Left cardiac atrium (tissue), 4 donors: ENCODE measurements at regions of chr5 and their contacts with region 1.

Region 1: GRCh38 chr5:123423278-123424149 is at the start of gene CEP120:
- DNase-seq: peak; percentile 99
- ATAC-seq: peak; percentile 99 to 100
- total RNA-seq, gene CEP120: 10.3 to 13.1 TPM

Region 2: GRCh38 chr5:123511648-123512605 is 88.4 kb after region 1 on chr5 and contains the start of gene CSNK1G3:
- intact Hi-C with region 1: loop called in 1 of 2 experiments (anchors 2 kb)
- DNase-seq: peak; percentile 98
- ATAC-seq: peak; percentile 98
- total RNA-seq, gene CSNK1G3: 27.1 to 28.6 TPM

Region 3: GRCh38 chr5:123605822-123606221 is 182.3 kb after region 1 on chr5:
- intact Hi-C with region 1: loop called (anchors 2 to 10 kb)
- DNase-seq: no peak
- ATAC-seq: no peak

Region 4: DNA sequence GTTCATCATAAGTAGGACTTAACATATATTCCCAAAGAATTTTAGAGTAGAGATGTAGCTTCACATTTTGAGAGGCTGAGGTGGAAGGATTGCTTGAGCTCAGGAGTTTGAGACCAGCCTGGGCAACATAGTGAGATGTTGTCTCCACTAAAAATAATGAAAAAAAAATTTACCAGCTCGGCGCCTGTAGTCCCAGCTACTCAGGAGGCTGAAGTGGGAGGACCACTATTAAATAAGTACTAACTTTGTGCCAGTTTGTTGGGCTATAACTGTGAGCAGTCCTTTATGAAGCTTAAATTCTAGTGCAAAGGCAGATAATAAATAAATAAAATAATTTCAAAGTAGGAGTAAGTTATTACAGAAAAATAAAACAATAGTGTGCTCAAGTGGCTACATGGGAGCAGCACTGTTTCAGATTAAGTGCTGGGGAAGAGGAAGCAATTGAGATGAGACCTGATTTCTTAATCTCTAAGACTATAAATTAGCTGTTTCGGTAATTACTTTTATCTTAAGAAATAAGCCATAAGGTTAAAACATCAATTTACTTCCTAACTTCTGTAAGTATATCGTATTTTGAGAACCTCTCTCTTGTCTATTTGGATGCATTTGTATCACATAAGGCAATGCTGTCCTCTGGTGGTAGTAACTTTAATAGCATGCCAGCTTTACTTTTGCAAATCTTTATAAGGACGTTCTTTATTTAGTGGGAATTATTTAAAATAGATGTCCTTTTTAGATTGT is 187.3 kb after region 1 on chr5:
- intact Hi-C with region 1: loop called (anchors 2 to 10 kb)
- DNase-seq: no peak
- ATAC-seq: peak; percentile 61 to 64